Naive thymus-derived CD4-positive, alpha-beta T cell (primary cell): ENCODE measurements at regions of chr19 and their contacts with region 1.

Region 1: GRCh38 chr19:8580710-8581281 is 3.6 kb upstream of the MYO1F start:
- DNase-seq: peak; percentile 73 to 94 (median 83)
- ATAC-seq: peak; percentile 91
- H3K4me3 ChIP-seq: no peak overlapping the region
- H3K4me3 Mint-ChIP-seq: peak overlapping the region in 2 of 10 donors; percentile 23 to 25
- H3K27ac ChIP-seq: no peak overlapping the region
- H3K27ac Mint-ChIP-seq: peak overlapping the region in 2 of 9 donors; percentile 38
- H3K4me1 ChIP-seq: peaks cover 29 to 45% of the 10 kb centered on the region in 2 donors
- H3K4me1 Mint-ChIP-seq: peaks cover 19 to 42% (median 32%) of the 10 kb centered on the region in 7 donors
- H3K27me3 ChIP-seq: no peaks in the 10 kb centered on the region
- H3K27me3 Mint-ChIP-seq: peaks cover 0 to 3% (median 0%) of the 10 kb centered on the region in 5 donors

Region 2: GRCh38 chr19:8269724-8270123 is 311.1 kb before region 1 on chr19:
- CTCF ChIA-PET with region 1: no interaction called
- POLR2A ChIA-PET with region 1: no interaction called
- intact Hi-C with region 1: loop called in 1 of 2 experiments (anchors 5 kb)
- DNase-seq: no peak
- ATAC-seq: no peak
- H3K4me3 ChIP-seq: peak overlapping the region; percentile 98
- H3K4me3 Mint-ChIP-seq: peak overlapping the region; percentile 85 to 97 (median 93)
- H3K27ac ChIP-seq: peak overlapping the region; percentile 88
- H3K27ac Mint-ChIP-seq: peak overlapping the region; percentile 66 to 95 (median 93)
- H3K4me1 ChIP-seq: peaks cover 0 to 6% of the 10 kb centered on the region in 2 donors
- H3K4me1 Mint-ChIP-seq: peaks cover 7 to 25% (median 13%) of the 10 kb centered on the region in 7 donors
- H3K27me3 ChIP-seq: no peaks in the 10 kb centered on the region
- H3K27me3 Mint-ChIP-seq: no peaks in the 10 kb centered on the region

Region 3: DNA sequence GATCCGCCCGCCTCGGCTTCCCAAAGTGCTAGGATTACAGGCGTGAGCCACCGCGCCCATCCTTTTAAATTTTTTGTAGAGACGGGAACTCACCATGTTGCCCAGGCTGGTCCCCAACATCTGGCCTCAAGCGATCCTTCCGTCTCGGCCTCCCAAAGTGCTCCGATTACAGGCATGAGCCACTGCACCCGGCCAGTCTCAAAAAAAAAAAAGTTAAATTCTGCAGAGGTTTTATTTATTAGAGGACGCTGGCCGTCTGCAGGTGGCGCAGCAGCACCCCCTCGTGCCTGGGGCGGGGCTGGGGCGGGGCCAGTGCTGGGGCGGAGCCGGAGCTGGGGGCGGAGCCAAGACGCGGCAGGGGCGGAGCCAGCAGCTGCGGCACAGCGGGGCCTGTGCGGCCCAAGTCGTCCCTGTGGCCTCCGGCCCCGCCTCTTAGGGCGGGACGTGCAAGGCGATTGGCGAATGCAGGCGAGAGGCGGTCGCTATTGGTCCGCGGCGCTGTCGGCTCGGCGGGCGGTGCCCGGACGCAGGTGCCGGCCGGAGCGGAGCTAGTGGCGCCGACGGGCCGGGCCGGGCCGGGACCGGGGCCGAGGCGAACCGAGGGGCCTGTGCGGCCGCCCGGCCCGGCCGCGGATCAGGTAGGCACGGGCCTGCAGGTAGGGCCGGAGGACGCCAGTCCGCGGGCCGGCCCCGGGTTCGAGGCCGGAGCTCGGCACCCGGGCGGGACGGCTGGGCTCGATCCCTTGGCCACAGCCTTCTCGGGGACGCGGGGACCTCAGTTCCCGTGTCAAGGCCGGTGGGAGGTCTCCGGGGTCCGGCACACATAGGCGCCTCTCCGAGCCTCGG is 167.8 kb before region 1 on chr19 and contains the start of gene MARCHF2:
- CTCF ChIA-PET with region 1: interaction called, 30 read pairs
- POLR2A ChIA-PET with region 1: interaction called, 23 read pairs
- intact Hi-C with region 1: loop called (anchors 1 to 2 kb)
- DNase-seq: peak; percentile 91 to 96 (median 93)
- ATAC-seq: peak; percentile 100
- H3K4me3 ChIP-seq: peak within 1 kb of the TSS; percentile 72
- H3K4me3 Mint-ChIP-seq: peak within 1 kb of the TSS; percentile 58 to 85 (median 71)
- H3K27ac ChIP-seq: peak within 1 kb of the TSS; percentile 76
- H3K27ac Mint-ChIP-seq: peak within 1 kb of the TSS in 6 of 9 donors; percentile 11 to 84 (median 34)
- H3K4me1 ChIP-seq: peaks cover 0 to 6% of the 10 kb centered on the region in 2 donors
- H3K4me1 Mint-ChIP-seq: peaks cover 0 to 15% (median 13%) of the 10 kb centered on the region in 7 donors
- H3K27me3 ChIP-seq: no peaks in the 10 kb centered on the region
- H3K27me3 Mint-ChIP-seq: no peaks in the 10 kb centered on the region
- total RNA-seq, gene MARCHF2: 18.0 to 42.1 (median 23.4) TPM

Region 4: DNA sequence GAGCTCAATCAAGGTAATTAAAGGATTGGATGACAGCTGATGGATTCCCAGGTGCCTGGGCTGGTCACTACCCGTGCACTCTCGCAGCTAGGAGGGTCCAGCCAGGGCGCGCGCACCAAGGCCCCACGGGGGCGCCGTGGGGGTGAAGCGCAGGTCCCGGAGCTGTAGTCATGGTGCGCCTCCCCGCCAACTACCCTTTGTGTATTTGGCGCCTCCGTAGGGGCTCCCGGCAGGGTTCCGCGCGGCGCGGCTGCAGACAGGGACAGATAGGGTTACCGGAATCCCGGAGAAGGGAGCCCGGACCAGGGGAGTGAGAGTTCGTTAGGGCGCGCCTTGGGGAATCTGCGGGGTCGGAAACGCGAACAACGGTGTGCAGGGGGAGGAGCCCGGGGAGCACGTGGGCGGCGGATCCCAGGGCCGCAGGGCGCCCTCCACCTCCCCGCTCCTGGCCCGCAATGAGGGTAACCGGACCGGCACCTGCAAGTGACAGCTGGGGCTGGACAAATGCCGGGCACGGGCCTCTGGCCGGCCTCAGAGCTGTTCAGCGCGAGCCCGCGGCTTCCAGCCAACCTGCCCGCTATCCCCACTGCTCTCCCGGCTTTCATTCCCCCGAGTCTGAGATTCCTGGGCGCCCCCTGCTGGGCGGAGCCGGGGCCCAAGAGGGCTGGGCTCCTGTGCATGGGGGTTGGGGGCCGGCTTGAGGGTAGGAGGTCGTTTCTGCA is 75.0 kb before region 1 on chr19:
- CTCF ChIA-PET with region 1: interaction called, 70 read pairs
- POLR2A ChIA-PET with region 1: interaction called, 48 read pairs
- intact Hi-C with region 1: loop called in 1 of 2 experiments (anchors 1 kb)
- DNase-seq: peak; percentile 40 to 80 (median 65)
- ATAC-seq: peak; percentile 74
- H3K4me3 ChIP-seq: peak overlapping the region; percentile 75
- H3K4me3 Mint-ChIP-seq: peak overlapping the region; percentile 88 to 97 (median 92)
- H3K27ac ChIP-seq: peak overlapping the region; percentile 76
- H3K27ac Mint-ChIP-seq: peak overlapping the region; percentile 75 to 92 (median 86)
- H3K4me1 ChIP-seq: peaks cover 5 to 15% of the 10 kb centered on the region in 2 donors
- H3K4me1 Mint-ChIP-seq: peaks cover 9 to 29% (median 20%) of the 10 kb centered on the region in 7 donors
- H3K27me3 ChIP-seq: no peaks in the 10 kb centered on the region
- H3K27me3 Mint-ChIP-seq: no peaks in the 10 kb centered on the region

Region 5: GRCh38 chr19:8569066-8569771 is 11.6 kb before region 1 on chr19:
- CTCF ChIA-PET with region 1: interaction called, 24 read pairs
- POLR2A ChIA-PET with region 1: interaction called, 33 read pairs
- intact Hi-C with region 1: loop called in 1 of 2 experiments (anchors 1 kb)
- DNase-seq: peak in 3 of 9 donors; percentile 19 to 71 (median 36)
- ATAC-seq: peak; percentile 76
- H3K4me3 ChIP-seq: peak overlapping the region; percentile 44
- H3K4me3 Mint-ChIP-seq: peak overlapping the region; percentile 66 to 88 (median 74)
- H3K27ac ChIP-seq: peak overlapping the region; percentile 59
- H3K27ac Mint-ChIP-seq: peak overlapping the region; percentile 88 to 98 (median 92)
- H3K4me1 ChIP-seq: peaks cover 46 to 72% of the 10 kb centered on the region in 2 donors
- H3K4me1 Mint-ChIP-seq: peaks cover 32 to 80% (median 64%) of the 10 kb centered on the region in 7 donors
- H3K27me3 ChIP-seq: no peaks in the 10 kb centered on the region
- H3K27me3 Mint-ChIP-seq: peaks cover 0 to 2% (median 0%) of the 10 kb centered on the region in 5 donors

Region 6: DNA sequence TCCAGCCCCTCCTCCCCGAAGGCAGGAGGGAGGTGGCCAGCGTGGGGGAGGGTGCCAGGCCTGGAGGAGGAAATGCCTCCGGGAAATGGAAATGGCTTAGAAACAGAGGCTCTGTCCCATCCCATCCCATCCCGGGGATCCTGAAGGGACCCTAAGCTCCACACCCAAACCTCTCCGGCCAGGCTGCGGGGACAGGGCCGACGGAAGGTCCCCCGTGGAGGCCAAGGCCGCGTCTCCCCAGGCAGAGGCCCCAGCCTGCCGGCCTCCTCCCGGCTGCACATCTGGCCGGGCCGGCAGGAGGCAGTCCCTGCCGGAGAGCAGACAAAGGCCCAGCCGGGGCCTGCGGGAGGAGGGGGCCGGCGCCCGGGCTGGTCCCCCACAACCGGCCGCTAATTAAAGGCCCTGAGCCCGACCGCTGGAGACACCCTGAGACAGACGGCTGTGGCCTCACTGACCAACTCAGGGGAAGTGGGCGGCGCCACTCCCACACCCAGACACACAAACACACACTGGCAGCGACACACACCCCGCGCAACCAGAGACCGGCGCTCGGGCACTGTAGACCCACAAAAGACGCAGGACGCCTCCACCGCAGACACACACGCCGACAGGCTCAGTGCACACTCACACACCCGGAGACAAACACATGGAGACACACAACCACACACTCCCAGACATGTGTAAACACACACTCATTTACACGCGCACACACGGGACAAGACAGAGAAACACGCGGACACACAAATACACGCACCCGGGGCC is 28.7 kb after region 1 on chr19:
- CTCF ChIA-PET with region 1: interaction called, 12 read pairs
- POLR2A ChIA-PET with region 1: no interaction called
- intact Hi-C with region 1: loop called in 1 of 2 experiments (anchors 2 kb)
- DNase-seq: peak in 2 of 9 donors; percentile 22 to 24
- ATAC-seq: peak; percentile 29
- H3K4me3 ChIP-seq: peak overlapping the region; percentile 69
- H3K4me3 Mint-ChIP-seq: peak overlapping the region; percentile 90 to 100 (median 98)
- H3K27ac ChIP-seq: peak overlapping the region; percentile 67
- H3K27ac Mint-ChIP-seq: peak overlapping the region; percentile 37 to 97 (median 90)
- H3K4me1 ChIP-seq: peaks cover 5 to 18% of the 10 kb centered on the region in 2 donors
- H3K4me1 Mint-ChIP-seq: peaks cover 13 to 52% (median 40%) of the 10 kb centered on the region in 7 donors
- H3K27me3 ChIP-seq: no peaks in the 10 kb centered on the region
- H3K27me3 Mint-ChIP-seq: peaks cover 0 to 25% (median 0%) of the 10 kb centered on the region in 5 donors

Region 7: DNA sequence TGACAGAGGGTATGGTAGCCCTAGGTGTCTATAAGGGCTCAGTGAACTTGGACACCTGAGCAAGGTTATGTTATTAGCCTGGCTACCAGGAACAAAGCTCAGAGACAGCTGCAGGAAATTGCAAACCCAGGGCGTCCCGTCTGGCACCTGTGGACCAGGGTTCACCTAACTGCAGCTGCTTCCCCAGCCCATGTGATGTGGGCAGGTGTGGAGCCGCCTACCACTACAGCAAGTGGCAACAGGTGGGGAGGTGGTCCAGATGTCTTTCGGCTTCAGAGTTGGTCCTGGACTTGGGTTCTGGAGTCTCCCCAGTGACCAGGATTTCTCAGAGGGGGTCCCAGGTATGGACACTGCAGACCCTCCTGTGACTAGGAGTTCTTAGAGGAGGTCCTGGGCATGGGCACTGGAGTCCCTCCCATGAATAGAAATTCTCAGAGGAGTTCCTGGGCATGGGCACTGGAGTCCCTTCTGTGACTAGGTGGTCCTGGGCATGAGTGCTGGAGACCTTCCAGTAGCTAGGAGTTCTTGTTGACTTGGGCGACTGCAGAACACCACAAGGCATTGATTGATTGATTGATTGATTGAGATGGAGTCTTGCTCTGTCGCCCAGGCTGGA is 92.6 kb after region 1 on chr19:
- CTCF ChIA-PET with region 1: no interaction called
- POLR2A ChIA-PET with region 1: no interaction called
- intact Hi-C with region 1: no loop called
- DNase-seq: no peak
- ATAC-seq: no peak
- H3K4me3 ChIP-seq: no peak overlapping the region
- H3K4me3 Mint-ChIP-seq: no peak overlapping the region
- H3K27ac ChIP-seq: no peak overlapping the region
- H3K27ac Mint-ChIP-seq: no peak overlapping the region
- H3K4me1 ChIP-seq: peaks cover 0 to 12% of the 10 kb centered on the region in 2 donors
- H3K4me1 Mint-ChIP-seq: peaks cover 7 to 32% (median 18%) of the 10 kb centered on the region in 7 donors
- H3K27me3 ChIP-seq: no peaks in the 10 kb centered on the region
- H3K27me3 Mint-ChIP-seq: peaks cover 0 to 8% (median 0%) of the 10 kb centered on the region in 5 donors

Region 8: GRCh38 chr19:8697671-8698432 is 117.1 kb after region 1 on chr19:
- CTCF ChIA-PET with region 1: interaction called, 4 read pairs
- POLR2A ChIA-PET with region 1: no interaction called
- intact Hi-C with region 1: loop called in 1 of 2 experiments (anchors 10 kb)
- DNase-seq: no peak
- ATAC-seq: no peak
- H3K4me3 ChIP-seq: no peak overlapping the region
- H3K4me3 Mint-ChIP-seq: no peak overlapping the region
- H3K27ac ChIP-seq: no peak overlapping the region
- H3K27ac Mint-ChIP-seq: no peak overlapping the region
- H3K4me1 ChIP-seq: peaks cover 26 to 27% of the 10 kb centered on the region in 2 donors
- H3K4me1 Mint-ChIP-seq: peaks cover 21 to 49% (median 24%) of the 10 kb centered on the region in 7 donors
- H3K27me3 ChIP-seq: peaks cover 0 to 4% of the 10 kb centered on the region in 2 donors
- H3K27me3 Mint-ChIP-seq: peaks cover 0 to 21% (median 0%) of the 10 kb centered on the region in 5 donors